ENCODE measurements at regions of chr2 and their contacts with region 1.

Region 1: GRCh38 chr2:236168110-236169067 is at the start of gene GBX2:
- DNase-seq: no peak
- ATAC-seq: no peak
- H3K4me3 Mint-ChIP-seq: peak within 1 kb of the TSS; percentile 38
- H3K27ac Mint-ChIP-seq: peak within 1 kb of the TSS; percentile 61
- H3K4me1 Mint-ChIP-seq: peaks cover 7% of the 10 kb centered on the region
- H3K27me3 Mint-ChIP-seq: peaks cover 54% of the 10 kb centered on the region
- total RNA-seq, gene GBX2: not detected

Region 2: DNA sequence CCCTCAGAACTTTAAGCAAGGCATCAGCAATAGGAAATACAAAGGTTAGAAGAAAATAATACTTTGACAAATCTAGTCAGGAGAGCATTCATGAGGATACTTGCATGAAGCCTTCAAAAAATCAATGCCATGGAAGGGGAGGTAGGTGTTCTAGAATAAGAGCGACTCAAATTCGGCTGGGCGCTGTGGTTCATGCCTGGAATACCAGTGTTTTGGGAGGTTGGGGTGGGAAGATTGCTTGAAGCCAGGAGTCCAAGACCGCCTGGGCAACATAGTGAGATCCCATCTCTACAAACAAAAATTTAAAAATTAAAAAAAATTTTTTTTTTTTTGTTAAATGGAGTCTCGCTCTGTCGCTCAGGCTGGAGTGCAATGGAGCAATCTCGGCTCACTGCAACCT is 22.0 kb before region 1 on chr2:
- CTCF ChIA-PET with region 1: no interaction called
- POLR2A ChIA-PET with region 1: no interaction called
- DNase-seq: no peak
- ATAC-seq: no peak
- H3K4me3 Mint-ChIP-seq: no peak overlapping the region
- H3K27ac Mint-ChIP-seq: no peak overlapping the region
- H3K4me1 Mint-ChIP-seq: no peaks in the 10 kb centered on the region
- H3K27me3 Mint-ChIP-seq: no peaks in the 10 kb centered on the region

Region 3: GRCh38 chr2:236180831-236181453 is 12.6 kb after region 1 on chr2:
- CTCF ChIA-PET with region 1: interaction called, 19 read pairs
- POLR2A ChIA-PET with region 1: no interaction called
- DNase-seq: peak; percentile 52
- ATAC-seq: no peak
- H3K4me3 Mint-ChIP-seq: no peak overlapping the region
- H3K27ac Mint-ChIP-seq: no peak overlapping the region
- H3K4me1 Mint-ChIP-seq: peaks cover 4% of the 10 kb centered on the region
- H3K27me3 Mint-ChIP-seq: peaks cover 35% of the 10 kb centered on the region

Region 4: GRCh38 chr2:236193051-236193450 is 24.7 kb after region 1 on chr2:
- CTCF ChIA-PET with region 1: no interaction called
- POLR2A ChIA-PET with region 1: no interaction called
- DNase-seq: no peak
- ATAC-seq: no peak
- H3K4me3 Mint-ChIP-seq: no peak overlapping the region
- H3K27ac Mint-ChIP-seq: no peak overlapping the region
- H3K4me1 Mint-ChIP-seq: no peaks in the 10 kb centered on the region
- H3K27me3 Mint-ChIP-seq: no peaks in the 10 kb centered on the region